Right cardiac atrium (tissue), 5 donors: ENCODE measurements at regions of chr11 and their contacts with region 1.

Region 1: GRCh38 chr11:130237282-130238006 is 77.3 kb downstream of the ZBTB44 start:
- DNase-seq: no peak
- ATAC-seq: no peak
- H3K4me3 ChIP-seq: no peak overlapping the region
- H3K27ac ChIP-seq: no peak overlapping the region
- H3K4me1 ChIP-seq: no peaks in the 10 kb centered on the region
- H3K27me3 ChIP-seq: no peaks in the 10 kb centered on the region

Region 2: GRCh38 chr11:130022798-130023583 is 214.5 kb before region 1 on chr11:
- intact Hi-C with region 1: no loop called
- DNase-seq: no peak
- ATAC-seq: no peak
- H3K4me3 ChIP-seq: no peak overlapping the region
- H3K27ac ChIP-seq: no peak overlapping the region
- H3K4me1 ChIP-seq: no peaks in the 10 kb centered on the region
- H3K27me3 ChIP-seq: no peaks in the 10 kb centered on the region

Region 3: GRCh38 chr11:130300567-130300966 is 63.1 kb after region 1 on chr11:
- intact Hi-C with region 1: loop called in 1 of 4 experiments (anchors 10 kb)
- DNase-seq: no peak
- ATAC-seq: no peak
- H3K4me3 ChIP-seq: no peak overlapping the region
- H3K27ac ChIP-seq: no peak overlapping the region
- H3K4me1 ChIP-seq: peaks cover 5% of the 10 kb centered on the region
- H3K27me3 ChIP-seq: no peaks in the 10 kb centered on the region

Region 4: DNA sequence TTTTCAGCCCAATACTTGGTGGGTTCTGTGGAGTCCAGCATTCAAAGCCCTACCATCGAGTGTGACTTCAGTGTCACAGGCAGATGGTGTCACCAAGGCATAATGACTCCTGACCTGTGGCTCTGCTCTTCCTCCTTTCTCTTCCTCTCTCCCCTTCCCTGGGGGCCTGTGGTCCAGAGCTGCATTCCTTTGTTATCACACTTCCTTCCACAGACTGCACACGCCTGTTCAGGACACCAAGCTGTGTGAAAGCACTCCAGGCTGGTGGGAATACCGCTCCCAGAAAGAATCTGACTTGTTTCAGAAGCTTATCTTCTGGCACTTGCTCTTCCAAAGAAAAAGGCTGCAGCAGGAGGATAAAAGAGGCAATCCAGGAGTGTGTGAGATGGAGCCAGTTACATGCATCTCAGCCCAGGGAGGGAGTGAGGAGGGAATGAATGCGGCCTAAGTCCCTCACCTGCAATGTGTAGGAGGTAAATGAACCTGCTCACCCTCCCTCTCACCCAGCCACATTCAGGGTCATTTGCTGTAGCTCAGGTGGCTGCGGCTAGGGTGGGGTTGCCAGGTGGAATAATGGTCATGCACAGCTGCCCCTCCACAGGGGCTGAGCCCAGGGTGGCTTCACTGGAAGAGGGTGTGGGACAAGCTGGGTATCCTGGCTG is 290.3 kb after region 1 on chr11:
- intact Hi-C with region 1: no loop called
- DNase-seq: peak; percentile 66 to 82 (median 72)
- ATAC-seq: peak; percentile 80 to 89
- H3K4me3 ChIP-seq: no peak overlapping the region
- H3K27ac ChIP-seq: peak overlapping the region; percentile 52
- H3K4me1 ChIP-seq: peaks cover 26% of the 10 kb centered on the region
- H3K27me3 ChIP-seq: no peaks in the 10 kb centered on the region